ENCODE measurements at regions of chr2 and their contacts with region 1.

Region 1: DNA sequence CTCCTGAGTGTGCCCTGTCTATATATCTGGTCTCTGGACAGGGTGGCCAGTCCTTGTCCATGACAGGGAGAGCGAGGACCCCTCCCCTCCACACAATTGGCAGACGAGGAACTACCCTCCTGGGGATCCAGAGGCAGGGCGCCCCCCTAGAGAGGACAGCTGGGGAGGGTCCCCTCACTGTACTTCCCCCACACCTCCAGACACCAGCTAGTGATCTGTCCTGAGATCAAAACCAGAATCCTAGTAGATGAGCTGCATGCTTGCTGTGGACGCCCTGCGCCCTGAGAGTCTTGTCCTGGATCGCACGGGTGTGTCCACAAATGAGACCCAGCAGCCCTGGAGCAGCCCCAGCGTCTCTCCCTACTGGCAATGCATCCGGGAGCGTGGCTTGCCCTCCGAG is 83.4 kb upstream of the PXDN start:
- H3K4me3 ChIP-seq: no peak overlapping the region
- H3K27ac ChIP-seq: no peak overlapping the region
- H3K4me1 ChIP-seq: no peaks in the 10 kb centered on the region
- CTCF ChIP-seq: no peak

Region 2: DNA sequence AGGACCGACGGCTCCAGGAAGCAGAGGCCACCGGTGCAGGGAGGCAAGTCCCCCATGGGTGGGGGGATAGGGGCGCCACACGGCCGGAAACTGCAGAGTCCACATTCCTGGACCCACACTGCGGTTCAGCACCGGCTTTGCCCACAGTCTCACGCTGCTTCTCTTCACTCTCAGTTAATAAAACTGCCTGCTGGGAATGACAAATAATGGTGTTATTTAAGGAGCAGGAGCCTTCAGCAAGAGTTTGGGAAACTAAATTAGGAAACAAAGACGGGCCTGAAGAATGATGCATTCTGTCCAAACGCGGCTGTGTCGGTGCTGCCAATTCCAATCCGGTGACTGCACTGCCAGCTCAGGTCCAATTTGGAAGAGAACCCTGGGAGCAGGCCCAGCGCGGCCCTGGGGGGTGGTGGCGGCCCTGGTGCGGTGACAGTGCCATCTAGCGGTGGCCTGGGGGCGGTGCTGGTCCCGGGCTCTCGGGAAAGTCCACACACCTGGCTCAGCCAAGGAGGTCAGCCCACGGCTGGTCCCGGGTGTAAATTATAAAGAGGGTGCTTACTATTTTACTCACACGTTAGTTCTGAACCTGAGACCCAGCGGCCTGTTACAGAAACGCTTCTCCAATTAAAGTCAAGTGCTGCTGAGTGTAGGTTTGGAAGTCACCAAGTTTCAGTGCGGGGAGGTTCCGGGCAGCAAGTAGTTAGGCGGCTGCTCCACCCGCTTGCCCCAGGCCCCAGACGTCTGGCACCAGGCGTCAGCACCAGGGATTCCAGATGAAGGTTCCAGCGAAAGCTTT is 10.2 kb before region 1 on chr2:
- CTCF ChIA-PET with region 1: interaction called, 11 read pairs
- POLR2A ChIA-PET with region 1: no interaction called
- H3K4me3 ChIP-seq: no peak overlapping the region
- H3K27ac ChIP-seq: no peak overlapping the region
- H3K4me1 ChIP-seq: no peaks in the 10 kb centered on the region
- CTCF ChIP-seq: peak; percentile 83

Measured in HEK293 (cell line).